HCT116 (cell line): ENCODE measurements at regions of chr21 and their contacts with region 1.

Region 1: DNA sequence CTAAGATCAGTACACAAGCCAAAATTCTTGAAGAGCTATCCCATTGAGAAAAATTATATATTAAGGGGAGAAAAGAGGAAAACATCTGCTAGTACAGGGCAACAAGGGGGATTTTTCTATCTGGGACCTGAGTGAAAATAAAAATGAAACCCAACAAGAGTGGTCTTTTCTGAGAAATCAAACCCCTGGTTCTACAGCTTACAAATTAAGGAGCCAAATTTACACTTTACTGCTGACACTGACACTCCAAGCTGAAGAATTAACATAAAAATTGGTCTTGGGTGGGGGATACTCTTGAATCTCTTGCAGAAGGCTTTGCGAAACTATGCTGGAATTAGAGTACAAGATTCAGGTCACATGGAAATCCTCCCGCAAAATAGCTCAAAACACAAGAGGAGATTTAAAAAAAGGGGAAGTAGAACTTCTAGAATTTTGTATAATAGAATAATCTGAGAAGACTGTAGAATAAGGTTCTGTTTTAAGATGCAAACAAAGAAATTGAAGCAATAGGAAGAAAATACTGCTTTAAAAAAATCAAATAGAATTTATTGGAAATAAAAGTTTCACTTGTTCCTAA is 32.1 kb upstream of the HSPA13 start:
- DNase-seq: no peak
- ATAC-seq: no peak
- H3K4me3 ChIP-seq: no peak overlapping the region
- H3K27ac ChIP-seq: no peak overlapping the region
- H3K4me1 ChIP-seq: no peaks in the 10 kb centered on the region
- H3K27me3 ChIP-seq: no peaks in the 10 kb centered on the region
- CTCF ChIP-seq: no peak
- POLR2A ChIP-seq: no peak
- RAD21 ChIP-seq: no peak

Region 2: DNA sequence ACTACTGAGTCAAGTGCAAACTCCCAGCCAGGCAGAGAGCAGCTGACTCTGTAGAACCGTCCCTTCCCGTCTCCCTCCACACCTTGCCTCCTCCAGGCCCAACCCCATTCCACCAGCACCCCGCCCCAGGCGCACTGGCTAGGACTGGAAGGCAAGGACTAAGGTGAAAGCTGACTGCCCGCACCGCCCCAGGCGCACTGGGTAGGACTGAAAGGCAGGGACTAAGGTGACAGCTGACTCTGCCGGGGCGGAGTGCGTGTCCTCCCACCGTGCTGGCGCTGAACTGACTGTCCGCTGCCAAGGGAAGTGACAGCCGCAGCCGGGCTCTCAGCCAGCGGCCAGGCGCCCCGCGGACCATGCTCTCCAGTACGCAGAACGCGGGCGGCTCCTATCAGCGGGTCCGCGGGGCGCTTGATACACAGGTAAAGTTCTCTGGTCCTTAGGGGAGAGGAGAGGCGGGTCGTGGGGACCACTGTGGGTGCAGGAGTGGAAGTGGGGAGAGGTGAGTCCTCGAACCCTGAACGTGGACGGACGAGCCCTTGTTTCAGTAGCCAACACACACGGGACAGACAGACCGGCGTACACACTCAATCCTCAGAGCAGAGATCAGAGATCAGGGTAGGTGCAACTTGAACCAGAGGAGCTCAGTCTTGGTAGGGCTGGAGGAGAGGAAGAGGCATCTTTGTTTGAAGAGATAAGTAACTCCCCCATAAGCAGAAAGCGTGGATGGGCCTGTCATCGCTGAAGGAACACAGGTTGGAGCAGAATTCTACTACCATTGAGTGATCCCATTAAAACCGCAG is 141.1 kb before region 1 on chr21:
- CTCF ChIA-PET with region 1: no interaction called
- POLR2A ChIA-PET with region 1: no interaction called
- RAD21 ChIA-PET with region 1: no interaction called
- intact Hi-C with region 1: loop called (anchors 10 kb)
- DNase-seq: no peak
- ATAC-seq: no peak
- H3K4me3 ChIP-seq: no peak overlapping the region
- H3K27ac ChIP-seq: no peak overlapping the region
- H3K4me1 ChIP-seq: no peaks in the 10 kb centered on the region
- H3K27me3 ChIP-seq: no peaks in the 10 kb centered on the region
- CTCF ChIP-seq: no peak
- POLR2A ChIP-seq: no peak
- RAD21 ChIP-seq: no peak